ENCODE measurements at regions of chrX and their contacts with region 1.

Region 1: GRCh38 chrX:72029483-72030411 is 102.0 kb downstream of the RTL5 start:
- DNase-seq: peak; percentile 33 to 38
- H3K4me3 ChIP-seq: no peak overlapping the region
- H3K4me3 Mint-ChIP-seq: no peak overlapping the region
- H3K27ac Mint-ChIP-seq: peak overlapping the region; percentile 50
- H3K4me1 ChIP-seq: peaks cover 16% of the 10 kb centered on the region
- H3K4me1 Mint-ChIP-seq: no peaks in the 10 kb centered on the region
- H3K27me3 ChIP-seq: no peaks in the 10 kb centered on the region
- H3K27me3 Mint-ChIP-seq: no peaks in the 10 kb centered on the region
- CTCF ChIP-seq: no peak

Region 2: DNA sequence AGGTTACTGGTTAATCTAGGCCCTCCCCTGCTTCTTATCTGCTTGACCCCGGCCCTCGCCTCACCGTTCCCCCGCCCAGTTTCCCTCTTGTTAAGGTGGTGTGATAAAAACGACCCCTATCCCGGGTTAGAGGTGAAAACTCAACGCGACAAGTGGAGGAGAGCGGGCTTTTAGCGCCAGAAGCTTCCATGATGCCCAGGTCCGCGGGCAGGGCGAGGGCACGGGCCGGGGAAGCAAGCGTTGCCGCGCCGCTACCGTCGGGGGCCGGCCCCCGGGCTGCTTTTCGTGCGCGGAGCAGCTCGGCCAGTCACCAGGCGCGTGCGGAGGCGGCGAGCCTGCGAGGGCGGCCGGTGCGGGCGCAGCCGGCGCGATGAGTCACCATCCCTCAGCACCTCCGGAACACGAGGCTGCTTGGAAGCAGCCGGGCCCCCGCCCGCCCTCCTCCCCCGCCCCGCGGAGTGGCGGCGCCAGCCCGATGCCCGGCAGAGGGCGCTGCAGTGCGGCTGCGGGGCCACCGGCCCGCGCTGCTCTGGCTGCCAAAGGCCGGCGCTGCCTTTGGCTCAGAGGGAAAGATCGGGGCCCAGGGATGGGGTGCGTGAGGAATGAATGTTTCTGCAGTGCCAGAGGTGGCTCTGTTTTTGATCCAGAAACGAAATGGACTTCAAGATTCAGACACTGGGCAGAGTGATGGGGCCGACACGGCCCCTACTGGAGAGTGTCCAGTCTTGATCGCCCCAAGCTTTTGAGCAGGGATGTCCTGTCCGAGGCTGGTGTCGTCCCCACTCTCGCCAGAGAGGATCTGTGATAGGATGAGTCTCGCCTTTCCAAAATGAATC is 11.3 kb before region 1 on chrX:
- CTCF ChIA-PET with region 1: interaction called, 11 read pairs
- POLR2A ChIA-PET with region 1: no interaction called
- intact Hi-C with region 1: loop called (anchors 1 kb)
- DNase-seq: peak; percentile 81 to 85
- H3K4me3 ChIP-seq: peak overlapping the region; percentile 45
- H3K4me3 Mint-ChIP-seq: peak overlapping the region; percentile 64
- H3K27ac Mint-ChIP-seq: no peak overlapping the region
- H3K4me1 ChIP-seq: 0 out of 2 replicates have a peak, but pooled peaks cover 7% of the 10 kb centered on the region
- H3K4me1 Mint-ChIP-seq: peaks cover 6% of the 10 kb centered on the region
- H3K27me3 ChIP-seq: no peaks in the 10 kb centered on the region
- H3K27me3 Mint-ChIP-seq: no peaks in the 10 kb centered on the region
- CTCF ChIP-seq: peak; percentile 43 to 73

Region 3: GRCh38 chrX:72201836-72202536 is 172.2 kb after region 1 on chrX:
- CTCF ChIA-PET with region 1: no interaction called
- POLR2A ChIA-PET with region 1: no interaction called
- intact Hi-C with region 1: no loop called
- DNase-seq: no peak
- H3K4me3 ChIP-seq: no peak overlapping the region
- H3K4me3 Mint-ChIP-seq: no peak overlapping the region
- H3K27ac Mint-ChIP-seq: no peak overlapping the region
- H3K4me1 ChIP-seq: no peaks in the 10 kb centered on the region
- H3K4me1 Mint-ChIP-seq: no peaks in the 10 kb centered on the region
- H3K27me3 ChIP-seq: no peaks in the 10 kb centered on the region
- H3K27me3 Mint-ChIP-seq: no peaks in the 10 kb centered on the region
- CTCF ChIP-seq: no peak